ENCODE measurements at regions of chr1 and their contacts with region 1.

Region 1: GRCh38 chr1:108559215-108560186 is at the start of gene EEIG2:
- DNase-seq: peak; percentile 61 to 94
- H3K4me3 ChIP-seq: peak within 1 kb of the TSS; percentile 39 to 78 (median 66)
- H3K27ac ChIP-seq: no peak within 1 kb of the TSS
- H3K4me1 ChIP-seq: peaks cover 0 to 11% (median 3%) of the 10 kb centered on the region in 4 experiments; a peak in 5 of 7 replicates
- H3K27me3 ChIP-seq: no peaks in the 10 kb centered on the region
- CTCF ChIP-seq: peak; percentile 68 to 77 (median 71)
- EP300 ChIP-seq: 0 out of 3 replicates have a peak, but pooled peaks of 1 of the 2 experiments have one; percentile 33
- POLR2A ChIP-seq: peak in 1 of 2 experiments; percentile 28; a peak in 1 of 3 replicates
- RAD21 ChIP-seq: peak in 1 of 2 experiments; percentile 39; a peak in 2 of 4 replicates
- total RNA-seq, gene EEIG2: 18.1 and 20.1 TPM in 2 replicates

Region 2: DNA sequence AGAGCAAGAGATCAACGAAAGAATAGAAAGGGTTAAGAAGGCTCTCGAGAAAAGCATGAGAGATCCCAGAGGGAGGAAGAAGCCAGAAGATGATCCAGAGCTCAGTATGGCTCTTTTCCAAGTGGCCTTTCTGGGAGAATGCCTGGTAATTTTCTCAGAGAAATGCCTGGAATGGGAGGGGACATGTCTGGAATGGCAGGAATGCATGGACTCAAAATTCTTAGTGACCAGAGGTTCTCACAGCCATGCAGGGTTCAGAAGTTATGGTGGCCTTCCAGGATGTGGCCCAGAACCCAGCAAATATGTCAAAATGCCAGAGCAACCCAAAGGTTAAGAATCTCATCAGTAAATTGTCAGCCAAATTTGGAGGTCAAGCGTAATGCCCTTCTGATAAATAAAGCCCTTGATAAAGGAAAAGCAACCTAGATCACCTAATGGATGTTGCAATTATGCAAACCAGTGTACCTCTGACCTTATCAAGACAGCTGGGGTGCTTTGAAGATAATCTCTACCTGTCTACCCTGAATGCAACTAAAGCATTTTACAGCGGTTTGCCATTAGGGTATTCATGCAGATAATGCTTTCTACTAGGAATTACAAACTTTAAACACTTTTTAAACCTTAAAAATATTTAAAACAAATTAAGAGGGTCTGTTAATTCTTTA is 56.3 kb before region 1 on chr1:
- CTCF ChIA-PET with region 1: interaction called, 13 read pairs
- POLR2A ChIA-PET with region 1: interaction called, 3 read pairs
- DNase-seq: peak in 1 of 2 experiments; percentile 17
- H3K4me3 ChIP-seq: no peak overlapping the region
- H3K27ac ChIP-seq: no peak overlapping the region
- H3K4me1 ChIP-seq: peaks cover 0 to 7% (median 0%) of the 10 kb centered on the region in 4 experiments; a peak in 1 of 7 replicates
- H3K27me3 ChIP-seq: no peaks in the 10 kb centered on the region
- CTCF ChIP-seq: no peak
- EP300 ChIP-seq: no peak
- POLR2A ChIP-seq: no peak
- RAD21 ChIP-seq: no peak

Region 3: DNA sequence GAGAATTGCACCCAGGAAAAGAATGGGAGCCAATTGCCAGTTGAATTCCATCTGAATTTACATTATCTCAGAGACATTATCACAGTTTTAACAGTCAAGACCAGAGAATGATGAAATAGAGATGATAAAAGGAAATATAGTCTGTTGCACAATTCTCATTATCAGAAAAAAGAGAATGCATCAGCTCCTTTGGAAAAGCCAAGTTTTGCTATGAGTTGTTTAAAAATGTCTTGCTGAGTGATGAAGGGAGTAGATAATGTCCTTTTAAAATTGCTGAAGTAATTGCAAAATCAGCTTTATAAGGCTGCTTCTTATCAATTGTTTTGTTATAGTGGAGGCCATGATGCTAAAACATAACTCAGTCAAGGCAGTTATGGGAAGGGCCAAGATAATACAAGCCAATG is 37.5 kb before region 1 on chr1:
- CTCF ChIA-PET with region 1: interaction called, 127 read pairs
- POLR2A ChIA-PET with region 1: interaction called, 5 read pairs
- DNase-seq: no peak
- H3K4me3 ChIP-seq: no peak overlapping the region
- H3K27ac ChIP-seq: no peak overlapping the region
- H3K4me1 ChIP-seq: no peaks in the 10 kb centered on the region
- H3K27me3 ChIP-seq: no peaks in the 10 kb centered on the region
- CTCF ChIP-seq: no peak
- EP300 ChIP-seq: no peak
- POLR2A ChIP-seq: no peak
- RAD21 ChIP-seq: no peak

Region 4: GRCh38 chr1:108533351-108534083 is 26.0 kb before region 1 on chr1:
- CTCF ChIA-PET with region 1: interaction called, 27 read pairs
- POLR2A ChIA-PET with region 1: interaction called, 7 read pairs
- DNase-seq: no peak
- H3K4me3 ChIP-seq: no peak overlapping the region
- H3K27ac ChIP-seq: no peak overlapping the region
- H3K4me1 ChIP-seq: peaks cover 0 to 2% (median 0%) of the 10 kb centered on the region in 4 experiments; a peak in 2 of 7 replicates
- H3K27me3 ChIP-seq: no peaks in the 10 kb centered on the region
- CTCF ChIP-seq: no peak
- EP300 ChIP-seq: no peak
- POLR2A ChIP-seq: no peak
- RAD21 ChIP-seq: no peak

Region 5: DNA sequence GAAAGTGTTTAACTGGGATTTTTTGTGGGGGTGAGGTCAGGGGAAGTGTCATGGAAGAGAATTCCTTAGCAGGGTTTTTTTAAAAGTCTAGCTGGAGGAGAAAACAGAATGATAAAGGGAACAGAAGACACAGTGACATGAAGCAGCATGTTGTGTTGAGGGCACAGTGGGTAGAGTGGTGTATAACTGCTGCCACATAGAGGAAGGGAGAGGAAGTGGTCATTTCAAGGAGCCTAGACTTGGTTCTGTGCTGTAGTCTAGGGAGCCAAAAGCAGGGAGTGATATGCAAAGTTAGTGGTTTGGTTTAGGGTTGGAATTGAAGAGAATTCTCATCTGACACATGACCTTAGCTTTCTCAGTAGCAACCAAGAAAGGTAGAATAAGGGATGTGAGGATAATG is 10.6 kb after region 1 on chr1:
- CTCF ChIA-PET with region 1: interaction called, 25 read pairs
- POLR2A ChIA-PET with region 1: no interaction called
- DNase-seq: no peak
- H3K4me3 ChIP-seq: no peak overlapping the region
- H3K27ac ChIP-seq: no peak overlapping the region
- H3K4me1 ChIP-seq: no peaks in the 10 kb centered on the region
- H3K27me3 ChIP-seq: no peaks in the 10 kb centered on the region
- CTCF ChIP-seq: peak; percentile 7 to 76 (median 57)
- EP300 ChIP-seq: no peak
- POLR2A ChIP-seq: no peak
- RAD21 ChIP-seq: peak; percentile 62 to 68